CD8-positive, alpha-beta T cell (primary cell): ENCODE measurements at regions of chr9 and their contacts with region 1.

Region 1: DNA sequence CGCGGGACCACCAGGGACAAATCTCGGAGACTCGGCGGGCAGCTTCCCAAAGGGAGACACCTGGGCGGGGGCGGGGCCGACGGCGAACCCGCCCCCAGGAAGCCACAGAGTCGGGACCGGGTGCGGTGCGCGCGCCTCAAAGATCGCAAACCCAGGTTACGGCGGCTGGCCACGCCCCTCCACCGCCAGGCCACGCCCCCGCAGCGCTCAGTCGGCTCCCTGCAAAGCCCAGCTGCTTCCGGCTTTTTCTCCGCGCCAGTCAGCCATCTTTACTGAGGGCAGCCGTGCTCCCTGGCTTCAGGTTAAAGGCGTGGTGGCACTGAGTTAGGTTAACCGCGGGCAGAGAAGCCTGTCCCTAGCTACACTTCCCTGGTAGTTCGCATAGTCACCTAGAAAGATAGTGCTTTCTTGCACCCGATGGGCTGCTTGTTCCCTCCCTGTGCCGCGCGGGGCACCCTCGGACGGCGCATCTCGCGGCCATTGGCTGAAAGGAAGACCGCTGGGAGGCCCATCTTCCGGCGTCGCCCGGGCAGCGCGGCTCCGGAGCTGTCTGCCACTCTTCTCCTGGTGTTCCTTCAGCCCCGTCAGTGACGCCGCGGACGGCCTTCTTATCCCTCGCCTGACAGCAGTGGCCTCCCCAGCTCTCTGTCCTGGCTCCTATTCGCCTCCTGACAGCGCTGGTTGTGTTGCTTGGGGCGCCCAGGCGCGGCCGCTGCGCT is at the start of gene TBC1D2:
- DNase-seq: peak; percentile 96 to 99 (median 97)
- ATAC-seq: peak; percentile 92
- H3K4me3 ChIP-seq: peak within 1 kb of the TSS; percentile 90 to 94
- H3K4me3 Mint-ChIP-seq: peak within 1 kb of the TSS; percentile 93
- H3K27ac ChIP-seq: peak within 1 kb of the TSS; percentile 82 to 88
- H3K27ac Mint-ChIP-seq: peak within 1 kb of the TSS; percentile 94
- H3K4me1 ChIP-seq: peaks cover 20% of the 10 kb centered on the region
- H3K4me1 Mint-ChIP-seq: peaks cover 33% of the 10 kb centered on the region
- H3K27me3 ChIP-seq: no peaks in the 10 kb centered on the region
- H3K27me3 Mint-ChIP-seq: no peaks in the 10 kb centered on the region
- CTCF ChIP-seq: peak; percentile 13
- total RNA-seq, gene TBC1D2: 1.9 to 2.6 TPM

Region 2: GRCh38 chr9:97696803-97697601 is 558.7 kb before region 1 on chr9 and contains the start of gene XPA:
- CTCF ChIA-PET with region 1: no interaction called
- POLR2A ChIA-PET with region 1: interaction called, 7 read pairs
- intact Hi-C with region 1: loop called (anchors 2 to 5 kb)
- DNase-seq: peak; percentile 90 to 99 (median 97)
- ATAC-seq: peak; percentile 94
- H3K4me3 ChIP-seq: peak within 1 kb of the TSS; percentile 68 to 79
- H3K4me3 Mint-ChIP-seq: peak within 1 kb of the TSS; percentile 83
- H3K27ac ChIP-seq: peak within 1 kb of the TSS; percentile 60 to 79
- H3K27ac Mint-ChIP-seq: peak within 1 kb of the TSS; percentile 92
- H3K4me1 ChIP-seq: peaks cover 39% of the 10 kb centered on the region
- H3K4me1 Mint-ChIP-seq: peaks cover 53% of the 10 kb centered on the region
- H3K27me3 ChIP-seq: no peaks in the 10 kb centered on the region
- H3K27me3 Mint-ChIP-seq: peaks cover 4% of the 10 kb centered on the region
- CTCF ChIP-seq: no peak
- total RNA-seq, gene XPA: 21.1 to 24.9 TPM

Region 3: GRCh38 chr9:97982683-97983588 is 272.8 kb before region 1 on chr9 and contains the start of gene ANP32B:
- CTCF ChIA-PET with region 1: no interaction called
- POLR2A ChIA-PET with region 1: interaction called, 30 read pairs
- intact Hi-C with region 1: loop called (anchors 1 kb)
- DNase-seq: peak; percentile 87 to 97 (median 94)
- ATAC-seq: peak; percentile 83
- H3K4me3 ChIP-seq: peak within 1 kb of the TSS; percentile 75 to 92
- H3K4me3 Mint-ChIP-seq: peak within 1 kb of the TSS; percentile 92
- H3K27ac ChIP-seq: peak within 1 kb of the TSS; percentile 75 to 85
- H3K27ac Mint-ChIP-seq: peak within 1 kb of the TSS; percentile 93
- H3K4me1 ChIP-seq: peaks cover 53% of the 10 kb centered on the region
- H3K4me1 Mint-ChIP-seq: peaks cover 64% of the 10 kb centered on the region
- H3K27me3 ChIP-seq: no peaks in the 10 kb centered on the region
- H3K27me3 Mint-ChIP-seq: no peaks in the 10 kb centered on the region
- CTCF ChIP-seq: peak; percentile 94
- total RNA-seq, gene ANP32B: 168 to 177 TPM

Region 4: DNA sequence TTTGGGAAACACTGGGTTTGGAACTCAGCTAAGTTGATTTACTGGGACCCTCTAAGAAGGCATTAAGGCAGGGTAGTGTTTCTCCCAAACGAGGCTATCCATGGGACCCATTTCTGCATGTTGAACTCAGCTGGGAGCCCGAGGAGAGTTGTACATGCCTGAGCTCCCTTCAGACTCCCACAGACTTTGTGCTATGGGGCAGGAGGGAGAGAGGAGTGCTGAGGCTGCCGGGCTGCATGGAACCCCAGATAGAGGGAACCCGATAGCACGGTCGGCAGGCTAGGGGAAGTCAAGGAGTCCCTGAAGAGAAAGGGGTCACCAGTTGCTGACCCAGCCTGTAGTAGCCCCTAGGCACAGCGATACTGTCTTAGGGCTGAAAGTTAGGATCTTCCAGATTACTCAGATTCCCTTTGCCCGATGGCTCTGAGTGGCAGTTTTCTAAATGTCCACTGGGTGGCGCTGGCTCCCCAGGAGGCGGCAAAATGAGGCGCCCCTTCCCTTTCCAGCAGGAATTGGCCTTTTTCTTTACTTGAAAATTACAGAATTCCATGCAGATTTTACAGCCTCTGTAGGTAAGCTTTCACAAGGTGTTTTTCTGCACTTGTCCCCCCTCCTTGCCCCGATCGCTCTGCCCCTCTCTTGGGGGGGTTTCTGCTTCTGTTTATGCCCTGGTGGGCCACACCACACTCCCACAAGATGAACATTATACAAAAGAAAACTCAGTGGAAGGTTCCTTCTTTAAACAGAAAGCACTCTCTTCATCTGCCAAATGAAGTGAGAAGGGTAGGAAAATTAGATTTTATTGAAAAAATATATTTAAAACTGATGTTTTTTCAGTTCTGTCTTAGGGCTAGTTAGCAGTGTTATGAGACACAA is 181.4 kb before region 1 on chr9:
- CTCF ChIA-PET with region 1: interaction called, 34 read pairs
- POLR2A ChIA-PET with region 1: interaction called, 8 read pairs
- intact Hi-C with region 1: loop called in 1 of 2 experiments (anchors 1 kb)
- DNase-seq: peak; percentile 36 to 85 (median 71)
- ATAC-seq: peak; percentile 34
- H3K4me3 ChIP-seq: no peak overlapping the region
- H3K4me3 Mint-ChIP-seq: peak overlapping the region; percentile 69
- H3K27ac ChIP-seq: peak overlapping the region; percentile 54 to 80
- H3K27ac Mint-ChIP-seq: peak overlapping the region; percentile 97
- H3K4me1 ChIP-seq: peaks cover 31% of the 10 kb centered on the region
- H3K4me1 Mint-ChIP-seq: peaks cover 42% of the 10 kb centered on the region
- H3K27me3 ChIP-seq: no peaks in the 10 kb centered on the region
- H3K27me3 Mint-ChIP-seq: no peaks in the 10 kb centered on the region
- CTCF ChIP-seq: peak; percentile 98

Region 5: DNA sequence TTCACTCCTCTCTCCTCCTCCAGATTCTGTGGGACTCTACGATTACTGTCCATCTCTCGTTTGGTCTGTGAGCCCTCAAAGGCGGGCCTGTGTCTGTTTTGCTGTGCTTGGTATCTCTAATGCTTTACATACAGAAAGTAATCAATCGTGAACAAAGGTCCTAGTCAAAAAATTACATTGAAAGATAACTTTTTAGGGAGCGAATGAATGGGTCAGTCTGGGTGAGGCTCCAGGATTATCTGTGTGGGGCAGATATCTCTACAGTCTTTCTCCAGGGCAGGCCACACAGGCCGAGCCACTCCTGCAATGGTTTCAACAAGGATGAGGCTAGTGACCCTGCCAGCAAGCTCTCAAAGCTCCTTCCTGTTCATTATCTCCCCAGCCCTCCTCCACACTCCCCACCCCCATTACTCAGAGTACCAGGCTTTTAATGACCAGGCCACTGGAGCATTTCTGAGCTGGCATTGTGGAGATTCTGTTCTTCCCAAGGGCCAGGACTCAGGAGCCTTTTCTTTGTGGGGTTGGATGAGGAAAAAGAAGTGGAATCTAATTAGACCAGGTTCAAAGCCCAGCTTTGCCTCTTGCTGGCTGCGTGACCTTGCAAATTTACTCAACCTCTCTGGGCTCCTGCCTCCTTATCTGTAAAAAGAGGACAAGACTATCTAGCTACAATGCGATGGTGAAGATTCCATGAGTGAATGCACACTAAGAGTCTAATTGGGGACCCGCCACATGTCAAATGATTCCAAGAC is 73.5 kb before region 1 on chr9:
- CTCF ChIA-PET with region 1: no interaction called
- POLR2A ChIA-PET with region 1: no interaction called
- intact Hi-C with region 1: no loop called
- DNase-seq: no peak
- ATAC-seq: no peak
- H3K4me3 ChIP-seq: no peak overlapping the region
- H3K4me3 Mint-ChIP-seq: no peak overlapping the region
- H3K27ac ChIP-seq: no peak overlapping the region
- H3K27ac Mint-ChIP-seq: peak overlapping the region; percentile 39
- H3K4me1 ChIP-seq: peaks cover 7% of the 10 kb centered on the region
- H3K4me1 Mint-ChIP-seq: peaks cover 52% of the 10 kb centered on the region
- H3K27me3 ChIP-seq: no peaks in the 10 kb centered on the region
- H3K27me3 Mint-ChIP-seq: no peaks in the 10 kb centered on the region
- CTCF ChIP-seq: no peak

Region 6: GRCh38 chr9:98192503-98193335 is 63.0 kb before region 1 on chr9 and contains the start of gene CORO2A:
- CTCF ChIA-PET with region 1: no interaction called
- POLR2A ChIA-PET with region 1: interaction called, 26 read pairs
- intact Hi-C with region 1: loop called (anchors 1 kb)
- DNase-seq: peak; percentile 16 to 85 (median 69)
- ATAC-seq: peak; percentile 72
- H3K4me3 ChIP-seq: peak within 1 kb of the TSS; percentile 80 to 84
- H3K4me3 Mint-ChIP-seq: peak within 1 kb of the TSS; percentile 85
- H3K27ac ChIP-seq: peak within 1 kb of the TSS; percentile 39 to 42
- H3K27ac Mint-ChIP-seq: peak within 1 kb of the TSS; percentile 69
- H3K4me1 ChIP-seq: peaks cover 32% of the 10 kb centered on the region
- H3K4me1 Mint-ChIP-seq: peaks cover 40% of the 10 kb centered on the region
- H3K27me3 ChIP-seq: no peaks in the 10 kb centered on the region
- H3K27me3 Mint-ChIP-seq: no peaks in the 10 kb centered on the region
- CTCF ChIP-seq: no peak
- total RNA-seq, gene CORO2A: 6.4 to 6.7 TPM

Region 7: GRCh38 chr9:99221621-99222415 is 966.1 kb after region 1 on chr9 and contains the starts of genes ALG2 and SEC61B:
- CTCF ChIA-PET with region 1: no interaction called
- POLR2A ChIA-PET with region 1: no interaction called
- intact Hi-C with region 1: loop called in 1 of 2 experiments (anchors 10 kb)
- DNase-seq: peak; percentile 87 to 96 (median 94)
- ATAC-seq: peak; percentile 88
- H3K4me3 ChIP-seq: peak within 1 kb of the TSS; percentile 79 to 90
- H3K4me3 Mint-ChIP-seq: peak within 1 kb of the TSS; percentile 99
- H3K27ac ChIP-seq: peak within 1 kb of the TSS; percentile 95 to 99
- H3K27ac Mint-ChIP-seq: peak within 1 kb of the TSS; percentile 100
- H3K4me1 ChIP-seq: peaks cover 30% of the 10 kb centered on the region
- H3K4me1 Mint-ChIP-seq: peaks cover 80% of the 10 kb centered on the region
- H3K27me3 ChIP-seq: no peaks in the 10 kb centered on the region
- H3K27me3 Mint-ChIP-seq: no peaks in the 10 kb centered on the region
- CTCF ChIP-seq: no peak
- total RNA-seq, gene ALG2: 21.0 to 24.7 TPM
- total RNA-seq, gene SEC61B: 107 to 108 TPM